ENCODE measurements at regions of chr1 and their contacts with region 1.

Region 1: DNA sequence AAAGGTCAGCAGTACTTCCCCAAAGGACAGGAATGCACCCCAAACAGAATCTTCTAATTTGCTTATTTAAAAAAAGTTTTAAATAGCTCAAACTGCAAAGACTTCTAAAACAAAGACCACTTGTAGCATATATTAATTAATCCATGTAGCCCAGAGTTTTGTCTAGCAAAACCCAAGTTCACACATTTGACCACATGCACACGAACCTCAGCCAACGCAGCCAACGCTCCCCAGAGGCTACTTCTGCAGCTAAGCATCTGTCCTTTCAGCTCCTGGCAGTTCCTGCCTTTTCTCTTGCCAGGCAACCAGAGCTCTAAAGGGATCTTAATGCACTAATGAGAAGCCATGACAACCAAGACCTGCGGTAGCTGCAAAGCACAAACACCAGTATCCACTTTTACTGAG is 89.6 kb downstream of the RERE start:
- DNase-seq: no peak
- H3K4me3 Mint-ChIP-seq: no peak overlapping the region
- H3K27ac Mint-ChIP-seq: no peak overlapping the region
- H3K4me1 Mint-ChIP-seq: peaks cover 20% of the 10 kb centered on the region
- H3K27me3 Mint-ChIP-seq: no peaks in the 10 kb centered on the region

Region 2: GRCh38 chr1:8409106-8409505 is 318.7 kb before region 1 on chr1:
- CTCF ChIA-PET with region 1: interaction called, 13 read pairs
- DNase-seq: no peak
- H3K4me3 Mint-ChIP-seq: peak overlapping the region; percentile 2
- H3K27ac Mint-ChIP-seq: peak overlapping the region; percentile 89
- H3K4me1 Mint-ChIP-seq: peaks cover 65% of the 10 kb centered on the region
- H3K27me3 Mint-ChIP-seq: no peaks in the 10 kb centered on the region

Region 3: GRCh38 chr1:8554956-8555534 is 172.8 kb before region 1 on chr1:
- CTCF ChIA-PET with region 1: interaction called, 14 read pairs
- DNase-seq: no peak
- H3K4me3 Mint-ChIP-seq: no peak overlapping the region
- H3K27ac Mint-ChIP-seq: peak overlapping the region; percentile 22
- H3K4me1 Mint-ChIP-seq: peaks cover 40% of the 10 kb centered on the region
- H3K27me3 Mint-ChIP-seq: no peaks in the 10 kb centered on the region

Region 4: GRCh38 chr1:8560611-8561544 is 166.9 kb before region 1 on chr1:
- CTCF ChIA-PET with region 1: interaction called, 42 read pairs
- DNase-seq: peak; percentile 44
- H3K4me3 Mint-ChIP-seq: no peak overlapping the region
- H3K27ac Mint-ChIP-seq: no peak overlapping the region
- H3K4me1 Mint-ChIP-seq: peaks cover 26% of the 10 kb centered on the region
- H3K27me3 Mint-ChIP-seq: no peaks in the 10 kb centered on the region

Region 5: GRCh38 chr1:8598060-8598724 is 129.6 kb before region 1 on chr1:
- CTCF ChIA-PET with region 1: interaction called, 11 read pairs
- DNase-seq: no peak
- H3K4me3 Mint-ChIP-seq: no peak overlapping the region
- H3K27ac Mint-ChIP-seq: no peak overlapping the region
- H3K4me1 Mint-ChIP-seq: peaks cover 40% of the 10 kb centered on the region
- H3K27me3 Mint-ChIP-seq: no peaks in the 10 kb centered on the region

Region 6: DNA sequence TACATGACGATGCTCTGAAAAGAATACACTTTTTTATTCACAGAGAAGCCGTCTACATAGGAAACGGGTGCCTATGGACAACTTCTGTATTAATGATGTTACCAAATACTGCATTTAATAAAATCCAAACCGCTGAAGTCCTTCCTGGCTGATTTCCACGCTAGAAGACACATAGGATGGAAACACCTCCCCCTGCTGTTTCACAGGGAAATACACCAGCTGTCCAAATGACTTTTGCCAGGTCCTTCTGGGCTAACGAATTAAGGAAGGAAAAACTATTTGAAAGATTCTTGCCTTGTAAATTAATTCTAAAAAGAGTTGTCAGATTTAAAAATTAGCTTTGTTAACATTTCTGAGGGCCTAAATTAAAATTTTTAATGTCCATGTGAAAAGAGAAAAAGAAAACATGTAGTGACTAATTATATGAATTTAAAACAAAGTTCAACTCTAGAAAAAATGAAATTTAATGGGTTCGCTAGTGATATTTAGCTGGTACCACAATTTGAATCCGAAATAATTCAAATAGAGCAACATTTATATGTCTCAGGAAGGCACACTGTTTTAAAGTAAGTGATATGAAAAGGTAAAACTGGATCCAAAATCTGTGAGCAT is 56.4 kb before region 1 on chr1:
- CTCF ChIA-PET with region 1: interaction called, 24 read pairs
- DNase-seq: peak; percentile 32
- H3K4me3 Mint-ChIP-seq: no peak overlapping the region
- H3K27ac Mint-ChIP-seq: no peak overlapping the region
- H3K4me1 Mint-ChIP-seq: peaks cover 39% of the 10 kb centered on the region
- H3K27me3 Mint-ChIP-seq: no peaks in the 10 kb centered on the region

Measured in activated naive CD4-positive, alpha-beta T cell treated with anti-CD3 and anti-CD28 coated beads, Interleukin-2, amount 10 ng/mL, durations not matched to agents 7 days and 5 days (primary cell).